ENCODE measurements at regions of chr7 and their contacts with region 1.

Region 1: GRCh38 chr7:39580149-39580874 is 14.1 kb downstream of the YAE1 start:
- DNase-seq: peak; percentile 82
- H3K4me3 ChIP-seq: no peak overlapping the region
- CTCF ChIP-seq: peak; percentile 64

Region 2: GRCh38 chr7:39085590-39086049 is 494.7 kb before region 1 on chr7:
- CTCF ChIA-PET with region 1: no interaction called
- POLR2A ChIA-PET with region 1: no interaction called
- DNase-seq: no peak
- H3K4me3 ChIP-seq: no peak overlapping the region
- CTCF ChIP-seq: no peak

Region 3: DNA sequence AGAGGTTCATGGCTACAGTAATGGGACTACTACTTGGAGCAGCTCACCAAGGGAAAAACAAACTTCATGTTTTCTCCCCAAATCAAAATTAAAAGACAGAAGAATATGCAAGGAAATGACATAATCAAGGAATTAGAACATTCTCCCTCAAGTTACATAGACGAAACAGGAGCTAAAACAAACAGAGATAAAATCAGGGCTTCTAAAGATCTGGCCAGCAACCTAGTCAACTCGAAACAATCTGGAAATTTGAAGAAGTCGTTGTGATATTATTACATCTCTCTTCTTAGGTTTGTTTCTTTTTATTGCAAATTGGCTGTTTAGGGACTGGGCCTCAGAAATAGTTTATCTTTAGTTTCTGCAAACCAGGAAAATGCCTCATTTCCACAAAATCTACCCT is 467.0 kb before region 1 on chr7:
- CTCF ChIA-PET with region 1: no interaction called
- POLR2A ChIA-PET with region 1: no interaction called
- DNase-seq: no peak
- H3K4me3 ChIP-seq: no peak overlapping the region
- CTCF ChIP-seq: no peak

Region 4: DNA sequence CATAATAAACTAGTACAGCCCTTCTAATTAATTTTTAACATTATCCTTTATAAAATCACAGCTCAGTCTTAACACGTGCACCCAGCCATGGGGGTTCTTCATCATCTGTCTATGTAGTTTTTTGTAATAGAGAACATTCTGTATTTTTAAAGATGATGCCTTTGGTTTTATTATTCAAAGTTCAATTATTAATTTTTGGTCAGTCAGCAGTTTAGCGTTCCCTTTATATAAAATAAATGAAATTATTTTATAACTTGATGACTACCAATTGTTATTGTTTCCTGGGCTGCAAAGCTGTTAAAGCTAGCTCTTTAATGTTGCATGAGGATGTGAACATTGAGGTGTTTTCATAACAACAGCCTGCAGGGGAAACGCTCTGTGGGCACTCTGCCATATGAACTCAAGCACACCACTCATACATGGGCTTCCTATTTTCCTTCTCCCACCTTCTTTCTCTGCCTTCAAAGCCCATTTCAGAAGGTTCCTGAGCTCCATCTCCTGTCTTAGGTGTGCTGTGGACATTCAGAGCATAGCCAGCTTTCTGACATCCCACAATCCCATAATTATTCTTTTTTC is 186.1 kb before region 1 on chr7:
- CTCF ChIA-PET with region 1: no interaction called
- POLR2A ChIA-PET with region 1: no interaction called
- DNase-seq: no peak
- H3K4me3 ChIP-seq: no peak overlapping the region
- CTCF ChIP-seq: no peak

Region 5: GRCh38 chr7:39547336-39547735 is 33.0 kb before region 1 on chr7:
- CTCF ChIA-PET with region 1: no interaction called
- POLR2A ChIA-PET with region 1: no interaction called
- DNase-seq: no peak
- H3K4me3 ChIP-seq: no peak overlapping the region
- CTCF ChIP-seq: no peak

Region 6: GRCh38 chr7:39566023-39566921 is 14.0 kb before region 1 on chr7 and contains the start of gene YAE1:
- CTCF ChIA-PET with region 1: interaction called, 15 read pairs
- POLR2A ChIA-PET with region 1: no interaction called
- DNase-seq: no peak
- H3K4me3 ChIP-seq: peak within 1 kb of the TSS; percentile 92
- CTCF ChIP-seq: no peak

Region 7: GRCh38 chr7:39623018-39623731 is 42.9 kb after region 1 on chr7 and contains the start of gene RALA:
- CTCF ChIA-PET with region 1: interaction called, 26 read pairs
- POLR2A ChIA-PET with region 1: interaction called, 14 read pairs
- DNase-seq: peak; percentile 55
- H3K4me3 ChIP-seq: peak within 1 kb of the TSS; percentile 77
- CTCF ChIP-seq: no peak

Region 8: DNA sequence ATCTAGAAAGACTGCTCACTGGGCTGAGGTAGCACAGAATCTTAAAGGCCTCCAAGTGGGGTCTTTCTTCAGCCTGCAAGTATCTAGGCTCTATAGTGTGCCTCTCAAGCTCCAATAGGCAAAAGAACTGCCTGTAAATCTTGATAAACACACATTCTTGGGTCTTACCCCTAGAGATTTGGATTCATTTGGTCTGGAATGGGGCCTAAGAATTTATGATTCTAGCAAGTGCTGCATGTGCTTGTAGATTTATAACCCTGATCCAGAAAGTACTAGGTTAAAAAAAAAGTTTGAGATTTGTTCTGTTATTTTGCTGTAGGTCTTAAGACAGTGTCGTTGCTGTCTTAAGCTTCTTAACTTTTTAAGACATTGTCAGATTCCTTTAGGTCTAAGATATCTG is 117.2 kb after region 1 on chr7:
- CTCF ChIA-PET with region 1: interaction called, 19 read pairs
- POLR2A ChIA-PET with region 1: no interaction called
- DNase-seq: no peak
- H3K4me3 ChIP-seq: no peak overlapping the region
- CTCF ChIP-seq: no peak

Region 9: GRCh38 chr7:39732837-39733804 is 152.8 kb after region 1 on chr7:
- CTCF ChIA-PET with region 1: interaction called, 544 read pairs
- POLR2A ChIA-PET with region 1: interaction called, 3 read pairs
- DNase-seq: peak; percentile 79
- H3K4me3 ChIP-seq: peak overlapping the region; percentile 71
- CTCF ChIP-seq: no peak

Region 10: DNA sequence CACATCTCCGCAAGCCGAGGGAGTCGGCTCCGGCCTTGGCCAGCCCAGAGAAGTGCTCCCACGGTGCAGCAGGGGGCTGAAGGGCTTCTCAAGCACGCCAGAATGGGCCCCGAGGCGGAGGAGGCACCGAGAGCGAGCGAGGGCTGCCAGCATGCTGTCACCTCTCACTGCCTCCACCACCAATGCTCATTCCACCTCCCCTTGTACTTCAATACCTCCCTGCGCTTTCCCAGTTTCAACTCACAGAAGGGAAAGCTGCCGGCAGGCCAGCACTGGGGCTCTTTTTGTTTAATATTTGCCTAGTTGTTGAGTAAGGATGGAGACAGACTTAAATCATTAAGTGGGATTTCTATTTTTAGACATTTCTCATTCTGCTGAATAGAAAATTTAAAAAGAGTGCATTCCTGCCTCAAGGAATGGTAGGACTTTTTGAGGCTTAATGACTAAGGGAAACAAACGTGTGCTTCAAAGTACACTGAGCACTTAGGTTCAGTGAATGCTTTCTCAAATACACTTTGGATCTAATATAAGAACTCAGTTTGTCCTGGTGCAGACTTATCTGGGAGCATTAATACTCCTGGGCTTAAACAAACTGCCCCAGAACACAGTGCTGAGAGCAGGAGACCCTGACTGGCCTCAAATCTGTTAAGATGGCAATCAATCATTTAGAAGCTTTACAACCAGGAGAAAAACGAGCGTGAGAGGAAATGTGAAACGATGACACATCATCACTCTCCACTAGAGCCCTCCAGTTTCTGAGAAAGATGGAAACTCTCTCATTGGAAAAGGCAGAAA is 174.2 kb after region 1 on chr7:
- CTCF ChIA-PET with region 1: interaction called, 544 read pairs
- POLR2A ChIA-PET with region 1: no interaction called
- DNase-seq: no peak
- H3K4me3 ChIP-seq: peak overlapping the region; percentile 30; the same call in 1 of the 2 replicates
- CTCF ChIP-seq: no peak

Region 11: DNA sequence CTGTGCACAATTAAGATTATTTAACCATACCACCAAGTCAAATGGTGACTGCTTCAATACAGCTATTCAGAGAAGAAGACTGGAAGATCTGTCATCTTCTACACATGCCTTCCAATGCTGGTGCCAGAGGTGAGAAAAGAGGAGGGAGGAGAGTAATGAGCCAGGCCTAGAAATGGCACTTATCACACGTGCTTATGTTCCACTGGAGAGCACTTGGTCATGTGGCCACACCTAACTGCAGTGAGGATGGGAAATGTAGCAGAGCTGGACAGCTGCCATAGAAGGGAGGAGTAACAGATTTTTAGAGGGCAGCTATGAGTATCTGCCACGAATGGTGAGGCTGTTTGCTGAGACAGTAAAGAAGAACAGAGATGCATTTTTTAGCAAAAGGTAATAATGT is 477.0 kb after region 1 on chr7:
- CTCF ChIA-PET with region 1: interaction called, 18 read pairs
- POLR2A ChIA-PET with region 1: no interaction called
- DNase-seq: no peak
- H3K4me3 ChIP-seq: no peak overlapping the region
- CTCF ChIP-seq: no peak

Measured in AG04449 (cell line).